GM12878 (cell line): ENCODE measurements at regions of chr10 and their contacts with region 1.

Region 1: GRCh38 chr10:117174439-117175214 is 22.7 kb upstream of the KCNK18 start:
- DNase-seq: peak; percentile 51
- ATAC-seq: peak; percentile 94
- H3K4me3 ChIP-seq: peak overlapping the region; percentile 50; the same call in 1 of the 2 replicates
- H3K27ac ChIP-seq: no peak overlapping the region
- H3K4me1 ChIP-seq: peaks cover 7% of the 10 kb centered on the region
- H3K27me3 ChIP-seq: peaks cover 0 to 4% of the 10 kb centered on the region in 2 experiments; a peak in 1 of 4 replicates
- CTCF ChIP-seq: peak; percentile 85 to 97 (median 95)
- EP300 ChIP-seq: no peak
- POLR2A ChIP-seq: no peak
- RAD21 ChIP-seq: peak; percentile 88

Region 2: DNA sequence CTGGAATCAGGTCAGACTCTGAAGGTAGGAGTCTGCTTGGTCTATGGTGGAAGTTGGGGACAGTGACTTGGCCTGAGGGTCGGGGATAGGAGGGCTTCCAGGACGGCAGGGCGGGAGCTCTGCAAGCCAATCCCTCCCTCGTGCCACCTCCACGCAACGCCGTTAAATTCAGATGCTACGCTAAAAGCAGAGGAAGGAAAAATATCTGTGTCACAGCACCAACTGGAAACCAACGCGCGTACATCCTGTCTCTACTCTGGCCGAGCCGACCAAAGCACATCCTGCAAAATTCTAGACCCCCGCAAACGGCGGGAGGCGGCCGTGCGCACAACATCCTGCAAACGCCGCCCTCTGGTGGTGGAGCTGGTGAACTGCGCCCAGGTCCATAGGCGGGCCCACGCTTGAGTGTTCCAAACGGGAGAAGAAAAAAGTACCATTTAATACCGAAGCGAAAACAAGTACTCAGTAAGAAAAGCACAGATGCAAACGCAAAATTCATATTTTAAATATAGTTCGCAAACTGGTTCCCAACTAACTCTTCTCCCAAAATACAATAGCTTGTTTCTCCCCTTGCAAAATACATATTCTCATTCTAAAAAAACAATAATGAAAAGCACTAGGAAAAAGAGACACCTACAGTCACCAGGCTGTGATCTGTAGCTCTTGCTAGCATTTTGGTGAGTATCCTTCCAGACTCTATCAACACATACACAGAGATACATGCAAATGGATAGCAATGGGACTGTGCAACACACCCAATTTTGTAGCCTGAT is 386.5 kb before region 1 on chr10:
- CTCF ChIA-PET with region 1: interaction called, 286 read pairs
- POLR2A ChIA-PET with region 1: no interaction called
- RAD21 ChIA-PET with region 1: interaction called, 8 read pairs
- SMC1A ChIA-PET with region 1: interaction called, 23 read pairs
- in situ Hi-C with region 1: loop called (anchors 5 kb)
- intact Hi-C with region 1: no loop called
- DNase-seq: no peak
- ATAC-seq: peak; percentile 91
- H3K4me3 ChIP-seq: no peak overlapping the region
- H3K27ac ChIP-seq: no peak overlapping the region
- H3K4me1 ChIP-seq: peaks cover 3% of the 10 kb centered on the region; the same call in 1 of the 2 replicates
- H3K27me3 ChIP-seq: no peaks in the 10 kb centered on the region
- CTCF ChIP-seq: peak; percentile 76 to 97 (median 93)
- EP300 ChIP-seq: no peak
- POLR2A ChIP-seq: no peak
- RAD21 ChIP-seq: peak; percentile 46

Region 3: DNA sequence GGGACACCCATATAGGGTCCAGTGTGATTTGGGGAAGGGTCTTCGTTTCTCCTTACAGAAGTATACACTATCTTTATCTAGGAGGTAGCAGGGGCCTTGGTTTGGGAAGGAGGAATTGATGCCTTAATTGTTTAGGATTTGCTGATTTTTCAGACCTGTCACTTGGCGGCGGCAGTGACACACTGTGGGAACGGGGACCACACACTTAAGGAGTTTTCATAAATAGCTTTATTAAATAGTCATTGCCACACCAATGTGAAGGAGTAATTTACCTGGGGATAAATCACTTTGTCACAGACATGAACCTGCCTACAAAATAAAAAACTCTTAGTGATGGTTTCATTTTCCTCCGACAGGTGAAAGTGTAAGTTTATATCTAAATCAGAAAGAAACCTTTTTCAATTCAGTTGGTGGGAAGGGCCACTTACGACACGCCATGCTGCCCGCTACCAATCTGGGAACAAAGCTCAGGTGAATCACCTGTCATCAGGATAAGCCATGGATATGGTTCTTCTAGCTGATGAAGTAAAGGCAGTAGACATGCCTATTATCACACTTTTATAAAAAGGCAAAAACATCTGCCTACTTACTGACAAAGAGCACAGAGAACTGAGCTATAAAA is 337.6 kb before region 1 on chr10:
- CTCF ChIA-PET with region 1: interaction called, 24 read pairs
- POLR2A ChIA-PET with region 1: no interaction called
- RAD21 ChIA-PET with region 1: interaction called, 5 read pairs
- SMC1A ChIA-PET with region 1: interaction called, 18 read pairs
- in situ Hi-C with region 1: no loop called
- intact Hi-C with region 1: no loop called
- DNase-seq: no peak
- ATAC-seq: no peak
- H3K4me3 ChIP-seq: no peak overlapping the region
- H3K27ac ChIP-seq: no peak overlapping the region
- H3K4me1 ChIP-seq: no peaks in the 10 kb centered on the region
- H3K27me3 ChIP-seq: no peaks in the 10 kb centered on the region; a peak in 1 of 4 replicates
- CTCF ChIP-seq: peak in 1 of 3 experiments; percentile 30; a peak in 1 of 6 replicates
- EP300 ChIP-seq: no peak
- POLR2A ChIP-seq: no peak
- RAD21 ChIP-seq: 0 out of 2 replicates have a peak, but pooled peaks have one; percentile 9

Region 4: GRCh38 chr10:117148284-117148683 is 26.3 kb before region 1 on chr10:
- CTCF ChIA-PET with region 1: interaction called, 10 read pairs
- POLR2A ChIA-PET with region 1: no interaction called
- RAD21 ChIA-PET with region 1: interaction called, 3 read pairs
- SMC1A ChIA-PET with region 1: no interaction called
- in situ Hi-C with region 1: no loop called
- intact Hi-C with region 1: no loop called
- DNase-seq: no peak
- ATAC-seq: no peak
- H3K4me3 ChIP-seq: no peak overlapping the region
- H3K27ac ChIP-seq: no peak overlapping the region
- H3K4me1 ChIP-seq: no peaks in the 10 kb centered on the region
- H3K27me3 ChIP-seq: no peaks in the 10 kb centered on the region
- CTCF ChIP-seq: no peak
- EP300 ChIP-seq: no peak
- POLR2A ChIP-seq: no peak
- RAD21 ChIP-seq: no peak